Endothelial cell of umbilical vein (primary cell): ENCODE measurements at regions of chr1 and their contacts with region 1.

Region 1: GRCh38 chr1:151198255-151199127 is at the start of gene PIP5K1A:
- DNase-seq: peak; percentile 98
- H3K4me3 ChIP-seq: peak within 1 kb of the TSS; percentile 86 to 96 (median 93)
- H3K27ac ChIP-seq: peak within 1 kb of the TSS; percentile 82
- H3K4me1 ChIP-seq: peaks cover 25% of the 10 kb centered on the region
- H3K27me3 ChIP-seq: no peaks in the 10 kb centered on the region
- CTCF ChIP-seq: no peak
- POLR2A ChIP-seq: peak; percentile 65
- total RNA-seq, gene PIP5K1A: 72.1 and 77.0 TPM in 2 replicates

Region 2: GRCh38 chr1:150235852-150236613 is 962.5 kb before region 1 on chr1 and contains the start of gene ANP32E:
- CTCF ChIA-PET with region 1: no interaction called
- POLR2A ChIA-PET with region 1: no interaction called
- dilution Hi-C with region 1: no loop called
- intact Hi-C with region 1: loop called (anchors 10 kb)
- DNase-seq: peak; percentile 99
- H3K4me3 ChIP-seq: peak within 1 kb of the TSS; percentile 72 to 95 (median 86)
- H3K27ac ChIP-seq: peak within 1 kb of the TSS; percentile 61
- H3K4me1 ChIP-seq: peaks cover 11% of the 10 kb centered on the region
- H3K27me3 ChIP-seq: no peaks in the 10 kb centered on the region
- CTCF ChIP-seq: no peak
- POLR2A ChIP-seq: peak; percentile 98
- total RNA-seq, gene ANP32E: 53.4 and 57.9 TPM in 2 replicates

Region 3: DNA sequence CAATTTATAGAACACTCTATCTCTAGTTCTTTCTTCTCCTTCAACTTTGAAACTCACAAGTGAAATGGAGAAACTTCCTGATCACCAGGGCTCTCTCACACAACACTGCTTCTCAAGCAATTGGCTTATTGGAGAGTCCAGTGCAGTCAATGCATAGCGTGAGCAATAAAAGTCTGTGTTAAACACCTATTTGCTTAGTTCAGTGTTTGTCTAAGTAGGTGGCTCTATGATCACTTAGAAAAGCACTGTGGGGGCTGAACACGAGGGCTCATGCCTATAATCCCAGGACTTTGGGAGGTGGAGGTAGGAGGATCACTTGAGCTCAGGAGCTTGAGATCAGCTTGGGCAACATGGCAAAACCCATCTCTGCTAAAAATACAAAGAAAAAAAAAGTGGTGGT is 445.1 kb before region 1 on chr1:
- CTCF ChIA-PET with region 1: no interaction called
- POLR2A ChIA-PET with region 1: no interaction called
- dilution Hi-C with region 1: no loop called
- intact Hi-C with region 1: no loop called
- DNase-seq: no peak
- H3K4me3 ChIP-seq: no peak overlapping the region
- H3K27ac ChIP-seq: no peak overlapping the region
- H3K4me1 ChIP-seq: no peaks in the 10 kb centered on the region
- H3K27me3 ChIP-seq: no peaks in the 10 kb centered on the region
- CTCF ChIP-seq: no peak
- POLR2A ChIP-seq: no peak

Region 4: DNA sequence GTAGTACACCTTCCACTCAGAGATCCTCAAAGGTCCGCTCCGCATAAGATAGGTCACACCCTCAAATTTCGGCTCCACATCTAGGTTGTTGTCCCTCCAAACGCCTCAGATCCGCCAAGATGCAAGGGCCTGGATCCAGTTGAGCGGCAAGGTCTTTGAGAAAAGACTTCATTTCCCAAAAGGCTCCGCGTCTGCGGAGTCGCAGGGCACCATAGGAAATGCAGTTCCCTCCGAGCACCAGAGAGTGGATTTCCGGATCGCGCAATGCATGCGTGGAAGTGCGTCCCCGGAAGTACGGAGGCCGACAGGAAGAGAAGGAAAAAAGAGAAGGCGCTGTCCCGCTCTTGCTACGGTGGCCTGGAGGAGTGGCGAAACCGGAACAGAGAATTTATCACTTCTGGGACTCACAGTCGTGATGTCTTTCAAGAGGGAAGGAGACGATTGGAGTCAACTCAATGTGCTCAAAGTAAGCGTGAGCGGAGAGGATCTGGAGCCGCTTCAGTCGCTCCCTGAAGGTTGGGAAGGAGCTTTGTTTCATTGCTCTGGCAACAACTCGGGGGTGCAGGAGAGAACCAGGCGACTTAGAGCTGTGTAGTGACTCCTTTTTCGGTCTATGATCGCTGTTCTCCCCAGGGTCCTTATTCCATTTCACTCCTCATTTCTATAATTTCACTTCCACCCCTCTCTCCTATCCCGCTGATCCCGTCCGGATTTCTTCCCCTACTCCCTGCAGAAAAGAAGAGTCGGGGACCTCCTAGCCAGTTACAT is 32.6 kb before region 1 on chr1 and contains the starts of genes LYSMD1 and SCNM1:
- CTCF ChIA-PET with region 1: no interaction called
- POLR2A ChIA-PET with region 1: no interaction called
- dilution Hi-C with region 1: no loop called
- intact Hi-C with region 1: loop called (anchors 1 kb)
- DNase-seq: peak; percentile 98
- H3K4me3 ChIP-seq: peak within 1 kb of the TSS; percentile 65 to 89 (median 81)
- H3K27ac ChIP-seq: peak within 1 kb of the TSS; percentile 65
- H3K4me1 ChIP-seq: peaks cover 19% of the 10 kb centered on the region
- H3K27me3 ChIP-seq: no peaks in the 10 kb centered on the region
- CTCF ChIP-seq: no peak
- POLR2A ChIP-seq: peak; percentile 69
- total RNA-seq, gene LYSMD1: 6.4 and 8.2 TPM in 2 replicates
- total RNA-seq, gene SCNM1: 43.1 and 49.0 TPM in 2 replicates

Region 5: DNA sequence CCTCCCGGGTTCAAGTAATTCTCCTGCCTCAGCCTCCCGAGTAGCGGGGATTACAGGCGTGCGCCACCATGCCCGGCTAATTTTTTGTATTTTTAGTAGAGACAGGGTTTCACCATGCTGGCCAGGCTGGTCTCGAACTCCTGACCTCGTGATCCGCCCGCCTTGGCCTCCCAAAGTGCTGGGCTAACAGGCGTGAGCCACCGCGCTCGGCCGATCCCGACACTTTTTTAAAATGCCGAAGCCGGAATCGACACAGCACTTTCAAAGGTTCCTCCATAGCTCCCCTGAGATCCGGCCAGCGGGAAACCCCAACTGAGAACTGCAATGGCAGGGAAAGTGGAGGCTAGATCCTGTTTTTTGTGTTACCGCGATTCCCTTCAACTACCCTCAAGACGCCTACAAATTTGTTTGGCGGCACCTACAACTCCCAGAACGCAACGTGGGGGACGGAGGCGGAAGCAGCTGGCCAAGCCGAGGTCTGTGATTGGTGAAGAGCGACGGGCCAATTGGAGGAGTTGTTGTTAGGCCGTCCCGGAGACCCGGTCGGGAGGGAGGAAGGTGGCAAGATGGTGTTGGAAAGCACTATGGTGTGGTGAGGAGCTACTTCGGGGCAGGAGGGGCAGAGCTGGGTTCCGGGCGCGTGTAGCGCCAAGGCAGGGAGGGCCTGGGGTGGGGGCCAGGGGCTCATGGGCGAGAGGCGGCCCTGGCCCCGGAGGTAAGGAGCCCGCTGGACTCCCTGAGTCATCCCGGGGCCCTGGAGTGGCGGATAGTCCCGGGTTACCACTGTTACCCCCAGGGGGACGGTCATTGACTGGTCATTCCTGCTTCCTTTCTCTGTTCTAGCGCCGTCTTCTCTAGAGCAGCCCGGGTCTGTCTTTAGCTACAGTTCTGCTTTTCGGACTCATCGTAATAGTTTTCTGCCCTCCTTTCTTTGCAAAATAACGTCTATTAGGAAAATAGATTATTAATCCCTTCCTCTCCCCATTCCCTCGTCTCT is 56.0 kb after region 1 on chr1 and contains the start of gene PSMD4:
- CTCF ChIA-PET with region 1: interaction called, 45 read pairs
- POLR2A ChIA-PET with region 1: no interaction called
- dilution Hi-C with region 1: no loop called
- intact Hi-C with region 1: loop called (anchors 1 kb)
- DNase-seq: peak; percentile 98
- H3K4me3 ChIP-seq: peak within 1 kb of the TSS; percentile 82 to 96 (median 87)
- H3K27ac ChIP-seq: peak within 1 kb of the TSS; percentile 80
- H3K4me1 ChIP-seq: peaks cover 7% of the 10 kb centered on the region
- H3K27me3 ChIP-seq: no peaks in the 10 kb centered on the region
- CTCF ChIP-seq: no peak
- POLR2A ChIP-seq: peak; percentile 96
- total RNA-seq, gene PSMD4: 181 and 184 TPM in 2 replicates

Region 6: DNA sequence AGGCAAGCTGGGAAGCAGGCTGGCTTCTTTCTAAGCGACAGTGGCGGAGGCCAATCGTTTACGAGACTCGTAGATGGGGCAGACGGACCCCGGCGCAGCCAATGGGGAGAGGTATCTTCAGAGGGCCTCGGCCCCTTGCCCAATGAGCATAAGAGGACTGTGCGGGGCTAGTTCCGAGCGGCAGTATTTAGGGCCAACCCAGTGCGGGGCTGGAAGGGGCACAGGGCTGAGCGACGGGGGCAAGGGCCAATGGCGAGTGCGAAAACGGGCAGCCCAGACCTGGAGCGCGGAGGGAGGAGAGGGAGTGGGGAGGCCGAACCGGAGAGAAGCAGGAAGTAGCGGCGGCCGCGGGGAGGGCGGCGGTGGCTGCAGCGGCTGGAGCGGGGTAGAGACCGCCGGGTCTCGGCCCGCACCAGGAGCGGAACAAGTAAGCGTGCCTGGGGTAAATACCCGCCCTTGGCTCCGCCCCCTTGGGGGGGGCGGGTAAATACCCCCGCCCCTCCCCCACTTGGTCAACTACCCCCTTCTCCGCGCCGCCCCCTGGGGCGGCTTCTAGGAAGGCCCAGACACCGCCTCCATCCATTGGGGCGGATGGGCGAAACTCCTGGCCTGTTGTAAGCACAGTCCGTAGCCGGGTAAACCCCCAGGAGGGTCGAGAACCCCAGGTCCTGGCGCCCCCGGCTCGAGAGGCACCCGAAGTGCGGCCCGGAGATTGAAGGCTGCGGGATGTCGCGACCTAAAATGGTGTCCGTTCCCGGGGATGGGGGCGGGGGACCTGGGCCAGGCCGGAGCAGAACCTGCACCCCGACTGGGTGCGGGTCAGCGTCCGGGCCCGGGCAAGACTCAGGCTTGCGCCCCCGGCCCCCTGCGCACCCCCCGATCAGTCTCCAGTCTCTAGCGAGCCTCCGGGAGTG is 83.7 kb after region 1 on chr1 and contains the start of gene ZNF687:
- CTCF ChIA-PET with region 1: interaction called, 5 read pairs
- POLR2A ChIA-PET with region 1: no interaction called
- dilution Hi-C with region 1: no loop called
- intact Hi-C with region 1: loop called (anchors 1 kb)
- DNase-seq: peak; percentile 100
- H3K4me3 ChIP-seq: peak within 1 kb of the TSS; percentile 66 to 89 (median 69)
- H3K27ac ChIP-seq: peak within 1 kb of the TSS; percentile 81
- H3K4me1 ChIP-seq: peaks cover 9% of the 10 kb centered on the region
- H3K27me3 ChIP-seq: peaks cover 0 to 2% of the 10 kb centered on the region in 2 experiments
- CTCF ChIP-seq: no peak
- POLR2A ChIP-seq: peak; percentile 76
- total RNA-seq, gene ZNF687: 15.5 and 17.9 TPM in 2 replicates

Region 7: DNA sequence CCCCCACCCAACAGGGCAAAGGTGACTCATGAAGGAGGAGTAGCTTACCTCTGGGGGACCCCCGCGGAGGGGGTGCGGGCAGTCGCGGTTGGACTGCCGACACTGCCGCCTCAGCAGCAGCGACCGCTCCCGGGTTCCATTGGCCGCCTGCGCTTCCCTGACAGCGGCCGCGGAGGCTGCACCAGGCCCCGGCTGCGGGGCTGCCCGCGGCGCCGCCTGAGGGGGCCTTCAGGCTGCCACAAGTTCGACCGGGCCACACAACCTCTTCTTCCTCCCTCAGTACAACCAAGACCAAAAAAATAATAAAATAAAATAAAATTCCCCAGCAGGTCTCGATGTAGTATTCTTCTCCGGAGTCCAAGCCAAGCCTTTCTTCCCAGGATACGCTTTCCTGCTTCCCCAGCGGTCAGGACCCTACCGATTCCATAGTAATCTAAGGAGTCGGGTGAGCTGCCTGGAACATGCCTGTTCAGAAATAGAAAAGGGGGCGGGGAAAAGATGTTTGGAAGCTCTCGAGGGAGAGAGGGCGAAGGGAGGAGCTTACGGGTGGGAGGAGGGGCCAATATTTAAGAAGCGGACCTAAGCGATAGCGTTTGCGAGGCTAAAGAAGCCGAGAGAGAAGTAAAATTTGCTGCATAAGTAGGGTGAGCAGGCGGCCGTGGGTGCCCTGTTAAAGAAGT is 128.9 kb after region 1 on chr1 and contains the start of gene PI4KB:
- CTCF ChIA-PET with region 1: no interaction called
- POLR2A ChIA-PET with region 1: no interaction called
- dilution Hi-C with region 1: no loop called
- intact Hi-C with region 1: loop called (anchors 5 kb)
- DNase-seq: peak; percentile 98
- H3K4me3 ChIP-seq: peak within 1 kb of the TSS; percentile 63 to 86 (median 83)
- H3K27ac ChIP-seq: peak within 1 kb of the TSS; percentile 93
- H3K4me1 ChIP-seq: peaks cover 22% of the 10 kb centered on the region
- H3K27me3 ChIP-seq: no peaks in the 10 kb centered on the region
- CTCF ChIP-seq: no peak
- POLR2A ChIP-seq: peak; percentile 68
- total RNA-seq, gene PI4KB: 58.3 and 60.9 TPM in 2 replicates

Region 8: DNA sequence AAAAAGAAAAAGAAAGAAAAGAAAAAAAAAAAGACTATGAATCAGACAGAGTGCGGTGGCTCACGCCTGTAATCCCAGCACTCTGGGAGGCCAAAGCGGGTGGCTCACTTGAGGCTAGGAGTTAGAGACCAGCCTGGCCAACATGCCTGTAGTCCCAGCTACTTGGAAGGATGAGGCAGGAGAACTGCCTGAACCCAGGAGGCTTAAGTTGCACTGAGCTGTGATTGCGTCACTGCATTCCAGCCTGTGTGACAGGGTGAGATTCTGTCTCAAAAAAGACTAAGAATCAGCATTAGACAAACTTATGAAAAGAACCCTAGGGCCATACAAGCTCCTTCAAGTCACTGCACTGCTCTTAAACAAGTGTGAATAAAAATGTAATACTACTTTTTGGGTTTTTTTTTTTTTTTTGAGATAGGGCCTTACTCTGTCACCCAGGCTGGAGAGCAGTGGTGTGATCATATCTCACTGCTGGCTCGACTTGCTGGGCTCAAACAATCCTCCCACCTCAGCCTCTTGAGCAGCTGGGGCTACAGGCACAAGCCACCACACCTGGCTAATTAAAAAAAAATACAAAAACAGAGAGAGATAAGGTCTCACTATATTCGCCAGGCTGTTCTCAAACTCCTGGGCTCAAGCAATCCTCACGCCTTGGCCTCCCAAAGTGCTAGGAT is 217.9 kb after region 1 on chr1:
- CTCF ChIA-PET with region 1: no interaction called
- POLR2A ChIA-PET with region 1: no interaction called
- dilution Hi-C with region 1: no loop called
- intact Hi-C with region 1: no loop called
- DNase-seq: no peak
- H3K4me3 ChIP-seq: no peak overlapping the region
- H3K27ac ChIP-seq: no peak overlapping the region
- H3K4me1 ChIP-seq: no peaks in the 10 kb centered on the region
- H3K27me3 ChIP-seq: no peaks in the 10 kb centered on the region
- CTCF ChIP-seq: no peak
- POLR2A ChIP-seq: no peak